ENCODE measurements at regions of chr12 and their contacts with region 1.

Region 1: GRCh38 chr12:56987551-56988053 is 18.7 kb downstream of the ZBTB39 start:
- DNase-seq: peak; percentile 89
- ATAC-seq: peak; percentile 94

Region 2: DNA sequence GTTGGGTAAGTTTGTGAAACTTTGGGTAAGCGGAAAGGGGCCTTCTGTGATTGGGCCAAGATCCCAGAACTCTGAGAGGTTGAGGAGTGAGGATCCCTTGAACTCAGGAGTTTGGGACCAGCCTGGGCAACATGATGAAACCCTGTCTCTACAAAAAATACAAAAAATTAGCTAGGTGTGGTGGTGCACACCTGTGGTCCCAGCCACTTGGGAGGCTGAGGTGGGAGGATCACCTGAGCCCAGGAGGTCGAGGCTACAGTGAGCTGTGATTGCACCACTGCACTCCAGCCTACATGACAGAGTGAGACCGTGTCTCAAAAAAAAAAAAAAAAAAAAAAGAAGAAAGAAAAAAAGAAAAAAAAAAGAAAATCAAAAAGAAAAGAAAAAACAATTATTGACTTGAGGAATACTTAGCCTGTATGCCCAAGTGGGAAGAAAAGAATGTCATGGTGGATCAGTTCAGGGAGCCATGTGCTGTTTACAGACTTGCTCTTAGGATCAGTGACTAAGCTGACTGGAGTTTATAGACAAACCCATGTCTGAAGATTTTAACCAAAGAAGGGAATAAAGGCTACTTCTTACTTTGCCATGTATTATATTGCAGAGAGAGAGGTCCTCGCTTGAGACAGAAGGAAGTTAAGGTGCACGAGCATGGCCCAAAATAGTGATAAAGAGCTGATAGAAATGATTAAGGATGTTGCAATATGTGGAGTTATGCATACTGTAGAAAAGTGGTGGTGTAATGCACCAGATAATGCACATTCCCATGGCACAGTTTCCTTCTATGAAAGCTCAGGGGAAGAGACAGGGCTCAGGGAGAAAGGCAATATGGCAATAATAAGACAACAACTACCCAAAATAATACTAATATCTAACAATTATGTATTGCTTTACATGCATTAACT is 223.6 kb before region 1 on chr12:
- intact Hi-C with region 1: loop called (anchors 2 kb)
- DNase-seq: no peak
- ATAC-seq: no peak

Region 3: GRCh38 chr12:57049890-57050289 is 62.3 kb after region 1 on chr12 and contains the start of gene MYO1A:
- intact Hi-C with region 1: no loop called
- DNase-seq: no peak
- ATAC-seq: no peak
- total RNA-seq, gene MYO1A: 0.08 TPM